ENCODE measurements at regions of chr1 and their contacts with region 1.

Region 1: DNA sequence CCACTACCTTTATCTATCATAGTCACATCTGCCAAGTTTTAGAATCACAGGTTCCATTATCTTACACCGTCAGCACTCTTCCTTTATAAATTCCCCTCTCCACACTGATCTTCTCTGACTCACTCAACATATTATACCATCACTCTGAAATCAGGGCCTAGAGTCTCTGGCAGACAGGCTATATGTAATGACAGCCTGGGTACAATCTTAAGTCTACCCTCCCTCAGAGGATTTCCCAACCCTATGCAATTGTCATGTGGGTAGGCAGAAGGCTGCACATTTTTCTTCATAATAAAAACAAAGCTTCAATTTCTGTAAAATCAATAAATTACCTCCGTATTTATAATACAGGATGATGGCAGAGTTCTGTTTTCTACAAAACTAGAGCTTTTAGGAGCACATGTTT is 138.0 kb downstream of the RERE start:
- DNase-seq: peak; percentile 27
- H3K4me3 Mint-ChIP-seq: no peak overlapping the region
- H3K27ac Mint-ChIP-seq: no peak overlapping the region
- H3K4me1 Mint-ChIP-seq: peaks cover 20% of the 10 kb centered on the region
- H3K27me3 Mint-ChIP-seq: no peaks in the 10 kb centered on the region
- CTCF ChIP-seq: no peak

Region 2: DNA sequence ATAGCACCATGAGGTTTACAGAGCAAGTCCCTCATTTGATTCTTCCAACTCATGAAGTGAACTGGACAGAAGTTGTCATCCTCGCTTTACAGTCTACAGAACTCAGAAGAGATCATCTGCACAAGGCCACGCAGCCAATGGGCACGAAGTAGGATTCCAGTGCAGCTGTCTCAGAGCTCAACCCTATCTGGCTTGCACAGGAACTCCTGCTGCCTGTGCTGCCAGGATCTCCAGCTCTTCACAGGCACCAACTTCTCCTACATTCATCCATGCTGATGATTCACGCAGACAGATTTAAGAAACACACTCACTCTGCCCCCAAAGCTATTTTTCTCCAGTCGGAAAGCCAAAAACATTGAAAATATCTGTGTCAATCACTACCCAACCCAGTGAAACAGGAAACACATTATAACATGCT is 19.0 kb before region 1 on chr1:
- CTCF ChIA-PET with region 1: no interaction called
- POLR2A ChIA-PET with region 1: interaction called, 22 read pairs
- intact Hi-C with region 1: no loop called
- DNase-seq: peak; percentile 77
- H3K4me3 Mint-ChIP-seq: no peak overlapping the region
- H3K27ac Mint-ChIP-seq: no peak overlapping the region
- H3K4me1 Mint-ChIP-seq: no peaks in the 10 kb centered on the region
- H3K27me3 Mint-ChIP-seq: no peaks in the 10 kb centered on the region
- CTCF ChIP-seq: no peak

Region 3: DNA sequence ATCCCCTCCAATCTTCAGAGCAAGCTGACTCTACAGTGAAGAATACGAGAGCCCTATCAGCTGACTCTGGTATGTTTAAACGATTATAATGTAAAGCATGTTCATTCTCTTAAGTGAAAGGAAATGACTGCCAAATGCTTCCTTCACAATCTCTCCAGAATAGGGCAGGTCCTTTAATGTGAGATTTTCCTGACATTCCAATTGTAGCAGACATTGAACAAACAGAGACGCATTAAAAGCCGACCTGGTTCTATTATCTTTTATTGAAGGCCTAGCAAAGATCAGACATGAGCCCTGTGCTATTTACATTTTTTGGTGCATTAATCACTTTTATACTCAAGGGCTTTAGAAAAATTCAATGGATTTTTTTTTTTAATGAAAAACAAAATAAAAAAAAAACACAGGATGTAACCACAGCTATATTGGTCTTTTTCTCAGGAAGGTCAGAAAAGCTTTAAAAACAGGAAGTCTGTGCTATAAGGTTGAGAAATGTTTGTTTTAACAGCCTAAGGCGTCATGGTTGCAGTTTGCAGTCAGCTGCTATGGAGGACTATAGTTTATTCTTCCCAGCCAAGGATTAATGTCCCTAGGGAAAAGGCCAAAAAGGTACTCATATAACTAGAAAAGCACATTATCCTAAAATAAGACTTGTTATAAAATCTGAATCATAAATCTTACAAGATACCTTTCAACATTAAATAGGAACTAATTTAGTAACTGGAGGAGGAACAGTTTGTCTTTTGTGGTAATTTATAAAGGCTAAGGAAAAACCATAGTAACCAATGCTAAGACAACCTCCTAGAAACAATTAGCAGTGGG is 33.2 kb after region 1 on chr1:
- CTCF ChIA-PET with region 1: interaction called, 3 read pairs
- POLR2A ChIA-PET with region 1: interaction called, 15 read pairs
- intact Hi-C with region 1: no loop called
- DNase-seq: peak; percentile 88
- H3K4me3 Mint-ChIP-seq: peak overlapping the region; percentile 50
- H3K27ac Mint-ChIP-seq: peak overlapping the region; percentile 82
- H3K4me1 Mint-ChIP-seq: peaks cover 22% of the 10 kb centered on the region
- H3K27me3 Mint-ChIP-seq: no peaks in the 10 kb centered on the region
- CTCF ChIP-seq: no peak

Region 4: DNA sequence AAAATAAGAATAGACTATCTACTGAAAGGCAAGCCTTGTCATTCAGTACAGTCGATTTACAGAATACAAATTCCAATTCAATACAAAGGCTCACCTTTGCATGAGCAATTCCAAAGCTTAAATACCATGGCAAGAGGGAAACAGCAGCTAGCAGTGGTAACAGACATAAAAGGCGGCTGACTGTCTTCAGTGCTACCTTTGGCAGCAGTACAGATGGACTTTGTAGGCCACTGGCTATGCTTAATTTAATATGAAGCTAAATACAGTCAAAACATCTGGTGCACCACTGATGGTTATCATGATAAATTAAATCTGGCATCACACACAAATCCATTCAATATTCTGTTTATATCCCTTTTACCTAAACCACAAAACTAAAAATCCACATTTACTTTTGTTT is 75.6 kb after region 1 on chr1:
- CTCF ChIA-PET with region 1: no interaction called
- POLR2A ChIA-PET with region 1: no interaction called
- intact Hi-C with region 1: no loop called
- DNase-seq: no peak
- H3K4me3 Mint-ChIP-seq: no peak overlapping the region
- H3K27ac Mint-ChIP-seq: no peak overlapping the region
- H3K4me1 Mint-ChIP-seq: no peaks in the 10 kb centered on the region
- H3K27me3 Mint-ChIP-seq: no peaks in the 10 kb centered on the region
- CTCF ChIP-seq: no peak